IMR-90 (cell line): ENCODE measurements at regions of chr2 and their contacts with region 1.

Region 1: DNA sequence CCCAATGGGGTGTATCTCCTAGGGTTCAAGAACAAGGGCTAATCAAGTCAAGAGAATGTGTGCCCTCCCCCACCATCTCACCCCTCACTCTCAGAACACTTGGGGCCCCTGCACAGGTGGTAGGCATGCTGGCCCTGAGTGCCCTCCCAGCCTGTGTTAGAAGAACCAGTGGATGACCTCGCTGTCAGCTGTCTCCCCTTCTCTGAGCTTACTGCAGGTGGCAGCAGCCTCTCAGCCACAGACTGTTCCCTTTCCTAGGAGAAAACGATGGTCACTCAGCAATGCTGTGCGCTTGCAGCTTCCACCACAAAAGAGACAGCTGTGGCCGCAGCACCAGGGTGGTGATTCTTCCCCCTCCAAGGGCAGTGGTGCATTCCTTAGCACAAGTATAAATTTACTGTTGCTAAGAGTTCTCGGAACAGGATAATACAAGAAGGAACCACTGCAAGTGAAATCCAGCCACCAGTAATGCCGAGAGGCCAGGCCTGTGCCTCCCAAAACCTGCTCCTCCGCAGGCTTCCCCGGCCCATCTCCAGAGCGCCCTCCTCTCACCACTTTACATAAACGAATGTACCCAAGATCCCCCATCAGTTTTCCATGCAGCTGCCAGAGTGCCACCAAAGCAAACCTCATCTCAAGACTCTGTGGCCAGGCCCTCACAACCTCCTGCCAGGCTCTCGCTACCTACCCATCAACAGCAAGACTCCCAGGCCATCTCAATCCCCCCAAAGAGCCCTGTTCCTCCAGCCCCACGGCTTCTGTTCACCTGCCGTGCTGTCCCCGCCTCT is 935 bp upstream of the RAMP1 start:
- DNase-seq: peak; percentile 91
- ATAC-seq: peak; percentile 93
- H3K4me3 ChIP-seq: no peak overlapping the region
- H3K27ac ChIP-seq: no peak overlapping the region
- H3K4me1 ChIP-seq: peaks cover 4% of the 10 kb centered on the region; the same call in 1 of the 2 replicates
- H3K27me3 ChIP-seq: no peaks in the 10 kb centered on the region; the same call in 1 of the 2 replicates
- CTCF ChIP-seq: peak; percentile 97
- POLR2A ChIP-seq: peak; percentile 62
- RAD21 ChIP-seq: peak; percentile 99

Region 2: DNA sequence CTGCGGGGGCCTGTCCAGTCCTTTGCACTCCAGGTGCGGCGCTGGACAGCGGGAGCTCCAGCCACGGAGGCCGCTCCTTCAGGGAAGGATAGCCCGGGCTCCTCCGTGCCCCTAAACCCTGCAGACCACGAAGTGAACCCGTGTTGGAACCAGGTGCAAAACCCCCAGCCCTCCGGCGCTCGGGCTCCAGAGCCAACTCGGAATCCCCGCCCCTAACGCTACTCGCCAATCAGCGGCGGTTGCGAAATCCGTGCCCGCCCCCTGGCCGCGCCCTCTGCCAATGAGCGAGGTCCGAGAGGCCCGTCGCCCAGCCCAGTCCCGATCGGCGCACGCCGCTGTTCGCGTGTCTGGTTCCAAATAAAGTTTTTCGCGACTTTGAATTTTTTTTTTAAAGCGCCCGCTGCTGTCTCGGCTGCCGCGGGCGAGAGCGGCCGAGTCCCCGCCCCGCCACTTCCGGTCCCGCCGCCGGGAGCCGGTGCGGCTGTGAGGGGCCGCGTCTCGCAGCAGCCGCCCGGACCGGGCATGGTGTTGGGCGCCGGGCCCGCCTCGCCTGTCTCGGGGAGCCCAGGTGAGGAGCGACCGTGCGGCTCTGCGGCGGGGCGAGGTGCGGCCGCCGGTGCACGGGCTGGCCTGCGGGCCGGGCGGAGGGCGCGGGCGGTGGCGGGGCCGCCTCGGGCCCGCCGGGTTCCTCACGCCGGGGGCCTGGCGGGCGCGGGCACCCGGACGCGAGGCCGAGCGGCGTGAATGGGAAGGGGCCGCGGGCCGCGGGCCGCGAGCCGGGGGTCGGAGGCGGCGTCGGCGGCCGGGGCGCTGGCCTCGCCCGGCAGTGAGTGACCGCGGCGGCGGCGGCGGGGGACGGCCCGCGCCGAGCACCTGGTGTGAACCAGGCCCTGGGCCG is 108.3 kb after region 1 on chr2 and contains the start of gene UBE2F:
- CTCF ChIA-PET with region 1: interaction called, 3 read pairs
- POLR2A ChIA-PET with region 1: no interaction called
- dilution Hi-C with region 1: no loop called
- in situ Hi-C with region 1: no loop called
- intact Hi-C with region 1: loop called (anchors 2 kb)
- DNase-seq: peak; percentile 95
- ATAC-seq: peak; percentile 96
- H3K4me3 ChIP-seq: peak within 1 kb of the TSS; percentile 85
- H3K27ac ChIP-seq: peak within 1 kb of the TSS; percentile 66
- H3K4me1 ChIP-seq: peaks cover 6% of the 10 kb centered on the region
- H3K27me3 ChIP-seq: no peaks in the 10 kb centered on the region
- CTCF ChIP-seq: no peak
- POLR2A ChIP-seq: peak; percentile 61; the same call in 1 of the 2 replicates
- RAD21 ChIP-seq: no peak
- total RNA-seq, gene UBE2F: 44.6 and 59.4 TPM in 2 replicates

Region 3: DNA sequence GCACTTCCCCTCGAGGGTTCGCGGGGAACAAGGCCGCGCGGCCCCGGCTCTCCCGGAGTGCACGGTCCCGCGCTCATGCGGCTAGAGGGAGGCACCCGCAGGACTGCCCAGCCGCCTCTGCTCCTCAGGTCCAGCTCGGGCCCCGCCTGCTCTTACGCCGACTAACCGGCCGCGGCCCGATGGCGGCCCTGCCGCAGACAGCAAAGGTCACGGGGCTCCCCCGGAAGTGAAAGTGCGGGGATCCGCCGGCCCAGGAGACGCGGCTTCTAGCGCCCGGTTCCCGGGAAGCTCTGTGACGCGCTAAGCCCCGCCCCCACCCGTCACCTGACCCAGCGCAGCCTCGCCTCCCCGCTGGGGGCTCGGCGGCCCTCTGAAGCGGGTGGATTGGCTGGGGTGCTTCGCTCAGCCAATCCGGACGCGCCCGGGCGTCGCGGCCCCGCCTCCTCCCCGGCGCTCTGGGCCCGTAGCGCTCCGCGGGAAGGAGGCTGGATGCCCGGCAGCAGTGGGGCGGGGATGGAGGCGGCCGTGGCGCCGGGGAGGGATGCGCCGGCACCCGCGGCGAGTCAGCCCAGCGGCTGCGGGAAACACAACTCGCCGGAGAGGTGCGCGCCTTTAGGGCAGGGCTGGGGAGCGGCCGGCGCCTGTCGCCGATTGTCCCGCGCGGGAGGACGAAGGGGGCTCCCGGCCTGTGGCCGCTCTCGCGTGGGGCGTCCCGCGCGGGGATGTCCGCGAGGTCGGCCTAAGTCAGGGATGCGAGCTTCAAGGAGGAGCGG is 202.2 kb after region 1 on chr2 and contains the start of gene SCLY:
- CTCF ChIA-PET with region 1: interaction called, 5 read pairs
- POLR2A ChIA-PET with region 1: interaction called, 4 read pairs
- dilution Hi-C with region 1: no loop called
- in situ Hi-C with region 1: no loop called
- intact Hi-C with region 1: loop called (anchors 1 kb)
- DNase-seq: peak; percentile 96
- ATAC-seq: peak; percentile 98
- H3K4me3 ChIP-seq: peak within 1 kb of the TSS; percentile 83
- H3K27ac ChIP-seq: peak within 1 kb of the TSS; percentile 65
- H3K4me1 ChIP-seq: no peaks in the 10 kb centered on the region; the same call in 1 of the 2 replicates
- H3K27me3 ChIP-seq: no peaks in the 10 kb centered on the region
- CTCF ChIP-seq: no peak
- POLR2A ChIP-seq: peak; percentile 85
- RAD21 ChIP-seq: peak; percentile 18; the same call in 1 of the 2 replicates
- total RNA-seq, gene SCLY: 8.6 and 12.2 TPM in 2 replicates

Region 4: DNA sequence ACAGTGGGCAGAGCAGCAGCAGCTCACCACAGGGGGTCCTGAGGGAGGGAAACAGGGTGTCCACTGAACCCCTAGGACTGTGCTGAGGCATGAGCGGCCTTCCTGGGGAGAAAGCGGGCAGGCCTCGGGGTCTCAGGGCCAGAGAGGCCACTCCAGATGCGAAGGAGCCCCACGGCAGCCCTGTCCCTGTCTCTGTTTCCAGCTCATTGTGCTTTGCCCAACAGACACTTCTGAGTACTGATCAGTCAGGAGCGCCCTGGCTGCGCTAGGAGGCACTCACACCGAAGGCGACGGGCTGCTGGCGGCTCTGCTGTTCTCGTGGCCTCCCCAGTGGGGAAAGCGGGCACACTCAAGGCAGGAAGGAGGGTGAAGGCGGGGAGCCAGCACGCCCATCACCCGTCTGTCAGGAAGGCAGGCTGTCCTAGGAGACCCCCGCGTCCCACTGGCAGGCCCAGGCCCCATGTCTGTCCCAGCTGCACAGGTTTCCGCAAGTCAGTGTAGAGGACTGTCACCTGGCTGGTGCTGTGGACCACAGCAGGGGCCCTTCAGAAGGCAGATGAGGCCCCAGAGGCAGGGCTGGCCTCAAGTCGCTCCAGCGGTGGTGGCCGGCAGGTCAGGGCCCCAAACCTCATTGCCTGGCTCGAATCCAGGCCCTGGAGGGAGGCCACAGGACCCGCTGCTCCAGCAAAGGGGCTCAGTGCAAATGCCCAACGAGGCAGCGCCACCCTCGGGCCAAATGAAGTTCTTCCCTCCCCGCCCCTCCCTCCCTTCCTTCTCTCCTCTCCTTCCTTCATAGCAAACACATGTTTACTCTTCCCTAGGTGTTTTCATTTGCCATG is 248.4 kb after region 1 on chr2:
- CTCF ChIA-PET with region 1: no interaction called
- POLR2A ChIA-PET with region 1: no interaction called
- dilution Hi-C with region 1: no loop called
- in situ Hi-C with region 1: no loop called
- intact Hi-C with region 1: loop called (anchors 2 kb)
- DNase-seq: no peak
- ATAC-seq: no peak
- H3K4me3 ChIP-seq: no peak overlapping the region
- H3K27ac ChIP-seq: no peak overlapping the region
- H3K4me1 ChIP-seq: no peaks in the 10 kb centered on the region
- H3K27me3 ChIP-seq: no peaks in the 10 kb centered on the region; the same call in 1 of the 2 replicates
- CTCF ChIP-seq: 0 out of 2 replicates have a peak, but pooled peaks have one; percentile 16
- POLR2A ChIP-seq: no peak
- RAD21 ChIP-seq: peak; percentile 32

Region 5: GRCh38 chr2:238120463-238121298 is 262.2 kb after region 1 on chr2:
- CTCF ChIA-PET with region 1: no interaction called
- POLR2A ChIA-PET with region 1: no interaction called
- dilution Hi-C with region 1: no loop called
- in situ Hi-C with region 1: no loop called
- intact Hi-C with region 1: loop called (anchors 5 kb)
- DNase-seq: peak; percentile 19
- ATAC-seq: peak; percentile 83
- H3K4me3 ChIP-seq: no peak overlapping the region
- H3K27ac ChIP-seq: no peak overlapping the region
- H3K4me1 ChIP-seq: peaks cover 4% of the 10 kb centered on the region; the same call in 1 of the 2 replicates
- H3K27me3 ChIP-seq: peaks cover 33% of the 10 kb centered on the region
- CTCF ChIP-seq: peak; percentile 45
- POLR2A ChIP-seq: no peak
- RAD21 ChIP-seq: peak; percentile 54